Activated CD4-positive, alpha-beta T cell treated with anti-CD3 and anti-CD28 coated beads for 36 hours (primary cell): ENCODE measurements at regions of chr2 and their contacts with region 1.

Region 1: GRCh38 chr2:15965564-15966019 is 25.2 kb downstream of the MYCN start:
- DNase-seq: peak; percentile 80
- ATAC-seq: peak; percentile 67
- H3K4me3 Mint-ChIP-seq: no peak overlapping the region
- H3K27ac Mint-ChIP-seq: peak overlapping the region; percentile 65
- H3K4me1 Mint-ChIP-seq: peaks cover 52% of the 10 kb centered on the region
- H3K27me3 Mint-ChIP-seq: peaks cover 2% of the 10 kb centered on the region

Region 2: GRCh38 chr2:15599994-15600393 is 365.6 kb before region 1 on chr2:
- CTCF ChIA-PET with region 1: no interaction called
- POLR2A ChIA-PET with region 1: no interaction called
- intact Hi-C with region 1: no loop called
- DNase-seq: no peak
- ATAC-seq: no peak
- H3K4me3 Mint-ChIP-seq: no peak overlapping the region
- H3K27ac Mint-ChIP-seq: peak overlapping the region; percentile 7
- H3K4me1 Mint-ChIP-seq: peaks cover 8% of the 10 kb centered on the region
- H3K27me3 Mint-ChIP-seq: no peaks in the 10 kb centered on the region

Region 3: GRCh38 chr2:16142383-16143361 is 177.1 kb after region 1 on chr2:
- CTCF ChIA-PET with region 1: no interaction called
- POLR2A ChIA-PET with region 1: no interaction called
- intact Hi-C with region 1: loop called in 1 of 2 experiments (anchors 10 kb)
- DNase-seq: peak; percentile 12
- ATAC-seq: peak; percentile 86
- H3K4me3 Mint-ChIP-seq: no peak overlapping the region
- H3K27ac Mint-ChIP-seq: no peak overlapping the region
- H3K4me1 Mint-ChIP-seq: no peaks in the 10 kb centered on the region
- H3K27me3 Mint-ChIP-seq: no peaks in the 10 kb centered on the region

Region 4: DNA sequence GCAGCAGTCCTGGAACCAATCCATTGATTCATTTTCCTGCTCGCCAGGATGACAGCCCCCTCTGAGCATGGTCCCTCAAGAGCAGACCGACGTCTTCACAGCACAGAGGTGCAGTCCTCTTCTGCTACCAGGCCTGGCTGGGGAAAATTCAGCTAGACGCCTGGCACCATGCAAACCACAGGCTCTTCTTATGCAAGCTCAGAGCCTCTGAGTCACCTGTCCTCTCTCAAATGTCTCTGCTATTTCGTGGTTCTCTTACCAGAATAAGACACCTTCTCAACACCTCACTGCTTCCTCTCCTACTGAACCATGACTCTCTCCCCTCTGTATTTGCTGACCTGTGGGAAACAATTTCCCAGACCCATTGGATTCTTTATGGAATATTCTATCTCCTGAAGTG is 779.9 kb after region 1 on chr2:
- CTCF ChIA-PET with region 1: no interaction called
- POLR2A ChIA-PET with region 1: no interaction called
- intact Hi-C with region 1: loop called in 1 of 2 experiments (anchors 5 kb)
- DNase-seq: peak; percentile 62
- ATAC-seq: peak; percentile 67
- H3K4me3 Mint-ChIP-seq: no peak overlapping the region
- H3K27ac Mint-ChIP-seq: no peak overlapping the region
- H3K4me1 Mint-ChIP-seq: peaks cover 33% of the 10 kb centered on the region
- H3K27me3 Mint-ChIP-seq: peaks cover 10% of the 10 kb centered on the region